AG04449 (cell line): ENCODE measurements at regions of chr15 and their contacts with region 1.

Region 1: GRCh38 chr15:75201609-75202250 is at the start of gene C15orf39:
- DNase-seq: no peak
- H3K4me3 ChIP-seq: peak within 1 kb of the TSS; percentile 89
- CTCF ChIP-seq: peak; percentile 73

Region 2: DNA sequence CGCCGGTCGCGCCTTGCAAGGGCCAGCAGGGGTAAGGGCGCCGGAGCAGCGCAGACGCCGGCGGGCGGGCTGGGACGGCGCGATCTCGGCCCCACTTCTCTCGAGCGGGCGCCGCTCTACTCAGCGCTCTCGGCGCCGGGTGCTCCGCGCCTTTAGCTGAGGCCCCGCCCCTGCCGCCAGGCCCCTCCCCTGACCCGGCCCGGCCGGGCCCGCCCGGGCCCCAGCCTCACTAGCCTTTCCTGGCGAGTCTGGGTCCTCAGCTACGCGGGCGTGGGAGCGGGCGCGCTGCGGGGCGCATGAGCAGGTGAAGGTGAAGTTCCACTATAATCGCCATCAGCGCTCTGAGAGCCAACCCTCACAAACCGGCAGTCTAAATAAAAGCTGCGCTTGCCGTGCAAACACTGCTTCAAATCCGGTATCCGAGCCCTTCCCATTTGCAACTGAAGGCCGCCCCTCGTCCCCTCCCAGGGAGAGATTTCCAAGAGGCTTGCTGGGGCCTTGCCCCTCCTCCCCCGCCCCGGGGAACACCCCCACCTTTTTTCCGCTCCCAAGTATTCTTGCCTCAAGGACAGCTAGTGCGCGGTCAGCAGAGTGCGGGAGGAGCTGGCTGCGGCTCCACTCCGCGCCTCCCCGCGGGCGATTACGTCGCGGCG is 245.0 kb before region 1 on chr15 and contains the start of gene RPP25:
- CTCF ChIA-PET with region 1: interaction called, 10 read pairs
- POLR2A ChIA-PET with region 1: no interaction called
- DNase-seq: no peak
- H3K4me3 ChIP-seq: peak within 1 kb of the TSS; percentile 56
- CTCF ChIP-seq: no peak

Region 3: GRCh38 chr15:75023181-75023871 is 178.4 kb before region 1 on chr15 and contains the start of gene PPCDC:
- CTCF ChIA-PET with region 1: interaction called, 337 read pairs
- POLR2A ChIA-PET with region 1: interaction called, 8 read pairs
- DNase-seq: peak; percentile 41
- H3K4me3 ChIP-seq: peak within 1 kb of the TSS; percentile 99
- CTCF ChIP-seq: no peak

Region 4: DNA sequence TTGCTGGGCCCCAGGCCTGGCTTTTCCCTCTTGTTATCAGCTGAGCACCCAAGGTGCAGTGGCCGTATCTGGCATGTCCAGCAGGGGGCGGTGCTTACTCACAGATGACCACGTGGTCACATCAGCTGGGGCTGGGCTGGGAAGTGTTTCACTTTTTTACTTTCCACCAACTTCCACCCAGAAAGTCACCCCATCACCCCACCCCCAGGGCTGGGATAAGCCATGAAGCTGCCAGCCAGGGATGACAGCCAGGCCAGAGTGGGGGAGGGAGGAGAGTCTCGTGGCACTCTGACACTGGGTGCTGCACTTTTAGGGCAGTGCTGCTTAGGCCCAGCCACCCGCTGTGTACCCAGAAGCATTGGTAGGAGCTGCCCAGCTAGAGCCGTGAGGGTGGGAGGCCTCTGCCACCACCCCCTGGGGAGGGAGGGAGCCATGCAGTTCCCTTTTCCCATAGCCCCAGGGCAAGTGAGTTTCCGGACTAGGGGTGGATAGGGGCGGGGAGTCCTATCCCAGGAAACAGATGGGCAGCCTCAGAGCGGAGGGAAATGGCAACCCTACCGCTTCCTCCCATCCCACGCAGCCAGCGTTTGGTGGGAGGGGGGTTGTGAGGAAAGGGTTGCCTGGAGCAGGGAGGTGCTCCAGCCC is 172.2 kb before region 1 on chr15:
- CTCF ChIA-PET with region 1: interaction called, 337 read pairs
- POLR2A ChIA-PET with region 1: interaction called, 11 read pairs
- DNase-seq: peak; percentile 31
- H3K4me3 ChIP-seq: peak overlapping the region; percentile 21
- CTCF ChIP-seq: peak; percentile 94

Region 5: GRCh38 chr15:75036314-75036649 is 165.4 kb before region 1 on chr15:
- CTCF ChIA-PET with region 1: interaction called, 337 read pairs
- POLR2A ChIA-PET with region 1: interaction called, 3 read pairs
- DNase-seq: no peak
- H3K4me3 ChIP-seq: no peak overlapping the region
- CTCF ChIP-seq: no peak

Region 6: DNA sequence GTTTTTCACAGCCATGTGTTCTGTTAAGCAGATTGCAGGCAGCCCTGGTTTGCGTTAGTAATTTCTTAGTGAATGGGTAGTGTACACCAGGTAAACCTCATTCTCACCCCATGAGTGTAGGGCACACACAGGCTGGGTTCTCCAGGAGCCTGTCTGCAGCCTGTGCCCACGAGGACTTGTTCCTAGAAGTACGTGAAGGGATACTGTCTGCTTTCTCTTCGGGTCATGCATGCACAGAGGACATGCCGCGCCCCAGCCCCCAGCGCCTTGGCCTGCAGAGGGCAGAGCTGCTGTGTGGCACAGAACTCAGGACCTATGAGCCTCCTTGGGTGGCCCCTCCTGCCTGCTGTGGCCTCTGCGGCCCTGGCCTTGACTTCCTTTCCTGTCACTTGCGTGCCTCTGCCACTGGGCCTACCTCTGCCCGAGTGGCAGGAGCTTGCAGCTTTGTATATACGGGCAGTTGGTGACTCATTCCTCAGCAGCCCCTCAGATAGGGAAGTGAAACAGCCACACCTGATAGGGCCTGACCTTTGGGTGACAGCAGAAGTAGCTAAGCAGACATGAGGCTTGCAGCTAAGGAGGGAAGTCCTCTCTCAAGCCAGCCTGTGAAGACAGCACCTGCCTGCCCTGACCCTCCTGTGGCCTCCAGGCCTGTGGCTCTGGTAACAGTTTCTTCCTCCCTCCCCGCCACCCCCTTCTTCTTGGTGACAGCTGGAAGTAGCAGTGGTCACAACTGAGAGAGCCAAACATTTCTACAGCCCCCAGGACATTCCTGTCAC is 158.8 kb before region 1 on chr15:
- CTCF ChIA-PET with region 1: interaction called, 51 read pairs
- POLR2A ChIA-PET with region 1: interaction called, 20 read pairs
- DNase-seq: no peak
- H3K4me3 ChIP-seq: no peak overlapping the region
- CTCF ChIP-seq: peak; percentile 43

Region 7: DNA sequence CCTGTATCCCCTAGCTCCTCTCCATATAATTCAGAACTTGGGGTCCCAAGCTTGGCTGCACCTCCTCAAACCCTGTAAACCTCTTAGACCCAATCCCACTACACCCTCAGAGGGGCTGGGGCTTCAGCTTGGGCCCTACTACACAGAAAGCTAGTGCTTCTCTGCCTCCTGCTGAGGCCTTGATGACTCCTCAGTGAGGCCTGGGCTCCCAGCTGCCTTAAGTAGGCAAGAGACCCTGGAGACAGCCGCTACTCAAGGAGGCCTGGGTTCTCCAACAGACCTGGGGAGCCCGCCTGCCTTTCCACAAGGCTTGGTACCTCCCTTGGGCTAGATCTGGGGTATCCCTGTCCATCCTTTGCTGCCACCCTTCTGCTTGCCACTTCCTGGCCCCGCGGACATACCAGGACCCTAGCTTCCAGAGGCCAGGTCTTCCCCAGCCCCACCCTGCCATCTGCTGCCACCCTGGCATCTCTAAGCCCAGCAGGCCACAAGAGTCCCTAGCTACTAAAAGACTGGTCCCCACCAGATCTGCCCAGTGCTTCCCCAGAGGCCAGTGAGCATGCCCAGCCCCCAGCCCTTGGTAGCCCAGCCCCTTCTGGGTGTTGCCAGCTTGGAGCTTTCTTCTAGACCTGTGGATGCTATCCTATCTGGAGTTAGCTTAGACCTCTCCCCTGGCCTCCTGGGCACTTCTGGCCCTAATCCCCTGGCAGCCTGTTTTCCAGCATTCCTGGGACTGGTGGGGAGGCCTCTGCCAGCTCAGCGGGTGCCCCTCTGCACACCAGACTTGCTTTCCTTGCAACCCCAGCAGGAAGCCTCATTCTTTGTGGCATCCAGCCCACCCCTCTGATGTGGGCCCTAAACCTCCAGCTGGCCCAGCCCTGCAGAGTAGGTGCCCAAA is 13.6 kb after region 1 on chr15:
- CTCF ChIA-PET with region 1: interaction called, 13 read pairs
- POLR2A ChIA-PET with region 1: interaction called, 3 read pairs
- DNase-seq: no peak
- H3K4me3 ChIP-seq: no peak overlapping the region
- CTCF ChIP-seq: no peak